ENCODE measurements at regions of chr22 and their contacts with region 1.

Region 1: GRCh38 chr22:24994070-24994763 is 41.7 kb downstream of the KIAA1671 start:
- DNase-seq: peak; percentile 89
- H3K4me3 Mint-ChIP-seq: peak overlapping the region; percentile 53
- H3K27ac Mint-ChIP-seq: peak overlapping the region; percentile 87
- H3K4me1 Mint-ChIP-seq: peaks cover 50% of the 10 kb centered on the region
- H3K27me3 Mint-ChIP-seq: peaks cover 6% of the 10 kb centered on the region

Region 2: DNA sequence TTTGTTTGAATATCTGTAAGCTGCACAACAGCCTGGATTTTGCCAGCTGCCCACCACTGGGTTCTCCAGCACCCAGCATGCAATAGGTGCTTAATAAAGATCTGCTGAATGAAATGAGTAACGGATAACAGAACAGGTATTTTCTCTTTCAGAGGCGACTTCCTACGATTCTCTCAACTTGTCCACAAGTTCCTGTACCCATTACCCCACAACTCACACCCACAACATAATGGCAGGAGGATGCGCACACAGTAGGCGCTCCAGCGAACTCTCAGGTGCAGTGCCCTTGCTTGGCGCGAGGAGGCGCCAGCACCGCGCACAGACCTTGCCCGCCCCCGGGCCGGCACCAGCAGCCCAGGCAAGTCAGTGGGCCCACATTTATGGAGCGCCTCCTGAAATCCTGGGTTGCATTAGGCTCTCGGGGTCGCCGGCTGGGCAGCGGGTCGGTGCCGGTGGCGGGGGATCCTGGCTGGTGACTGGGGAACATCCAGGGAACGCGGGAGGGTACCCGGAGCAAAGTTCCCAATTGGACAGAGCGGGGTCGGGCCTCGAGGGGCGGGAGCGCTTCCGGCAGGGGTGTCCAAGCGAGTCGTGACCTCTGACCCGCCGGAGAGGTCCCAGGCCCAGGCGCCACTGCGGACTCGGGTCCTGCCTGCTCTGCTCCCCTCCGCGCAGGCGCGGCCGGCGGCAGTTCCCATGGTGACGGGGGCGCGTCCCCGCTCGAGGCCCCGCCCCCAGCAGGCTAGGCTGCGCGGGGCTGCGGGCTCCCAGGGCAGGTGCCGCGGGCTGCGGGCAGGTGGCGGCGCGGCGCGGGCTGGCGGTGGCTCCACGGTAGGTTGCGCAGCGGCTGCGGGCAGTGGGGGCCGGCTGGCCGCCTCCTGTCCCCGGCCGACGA is 42.0 kb before region 1 on chr22 and contains the start of gene KIAA1671:
- intact Hi-C with region 1: loop called (anchors 1 kb)
- DNase-seq: peak; percentile 98
- H3K4me3 Mint-ChIP-seq: peak within 1 kb of the TSS; percentile 87
- H3K27ac Mint-ChIP-seq: peak within 1 kb of the TSS; percentile 62
- H3K4me1 Mint-ChIP-seq: peaks cover 20% of the 10 kb centered on the region
- H3K27me3 Mint-ChIP-seq: peaks cover 54% of the 10 kb centered on the region
- total RNA-seq, gene KIAA1671: 11.2 and 11.4 TPM in 2 replicates

Region 3: DNA sequence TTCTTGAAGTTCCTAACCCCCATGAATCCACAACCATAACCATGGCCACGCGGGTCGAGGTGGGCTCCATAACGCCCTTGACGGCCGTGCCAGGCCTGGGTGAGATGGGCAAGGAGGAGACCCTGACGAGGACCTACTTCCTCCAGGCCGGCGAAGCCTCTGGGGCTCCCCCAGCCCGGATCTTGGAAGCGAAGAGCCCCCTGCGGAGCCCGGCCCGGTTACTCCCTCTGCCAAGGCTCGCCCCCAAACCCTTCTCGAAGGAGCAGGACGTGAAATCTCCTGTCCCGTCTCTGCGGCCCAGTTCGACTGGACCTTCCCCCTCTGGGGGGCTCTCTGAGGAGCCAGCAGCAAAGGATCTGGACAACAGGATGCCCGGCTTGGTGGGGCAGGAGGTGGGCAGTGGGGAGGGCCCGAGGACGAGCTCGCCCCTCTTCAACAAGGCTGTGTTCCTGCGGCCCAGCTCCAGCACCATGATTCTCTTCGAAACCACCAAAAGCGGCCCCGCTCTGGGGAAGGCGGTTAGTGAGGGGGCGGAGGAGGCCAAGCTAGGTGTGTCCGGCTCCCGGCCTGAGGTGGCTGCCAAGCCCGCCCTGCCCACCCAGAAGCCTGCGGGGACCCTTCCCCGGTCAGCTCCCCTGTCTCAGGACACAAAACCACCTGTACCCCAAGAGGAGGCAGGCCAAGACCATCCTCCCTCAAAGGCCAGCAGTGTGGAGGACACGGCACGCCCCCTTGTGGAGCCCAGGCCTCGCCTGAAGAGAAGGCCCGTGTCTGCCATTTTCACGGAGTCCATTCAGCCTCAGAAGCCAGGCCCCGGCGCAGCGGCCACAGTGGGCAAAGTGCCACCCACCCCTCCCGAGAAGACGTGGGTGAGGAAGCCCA is 34.0 kb after region 1 on chr22:
- intact Hi-C with region 1: loop called (anchors 5 kb)
- DNase-seq: peak; percentile 77
- H3K4me3 Mint-ChIP-seq: no peak overlapping the region
- H3K27ac Mint-ChIP-seq: no peak overlapping the region
- H3K4me1 Mint-ChIP-seq: peaks cover 20% of the 10 kb centered on the region
- H3K27me3 Mint-ChIP-seq: no peaks in the 10 kb centered on the region

Region 4: GRCh38 chr22:25054943-25055511 is 60.8 kb after region 1 on chr22:
- intact Hi-C with region 1: loop called (anchors 2 kb)
- DNase-seq: peak; percentile 76
- H3K4me3 Mint-ChIP-seq: peak overlapping the region; percentile 38
- H3K27ac Mint-ChIP-seq: peak overlapping the region; percentile 85
- H3K4me1 Mint-ChIP-seq: peaks cover 27% of the 10 kb centered on the region
- H3K27me3 Mint-ChIP-seq: peaks cover 2% of the 10 kb centered on the region

Measured in activated CD4-positive, alpha-beta T cell treated with anti-CD3 and anti-CD28 coated beads, Interleukin-2, amount 10 ng/mL, durations not matched to agents 24 days and 14 days (primary cell).